CD4-positive, alpha-beta T cell (primary cell): ENCODE measurements at regions of chr19 and their contacts with region 1.

Region 1: DNA sequence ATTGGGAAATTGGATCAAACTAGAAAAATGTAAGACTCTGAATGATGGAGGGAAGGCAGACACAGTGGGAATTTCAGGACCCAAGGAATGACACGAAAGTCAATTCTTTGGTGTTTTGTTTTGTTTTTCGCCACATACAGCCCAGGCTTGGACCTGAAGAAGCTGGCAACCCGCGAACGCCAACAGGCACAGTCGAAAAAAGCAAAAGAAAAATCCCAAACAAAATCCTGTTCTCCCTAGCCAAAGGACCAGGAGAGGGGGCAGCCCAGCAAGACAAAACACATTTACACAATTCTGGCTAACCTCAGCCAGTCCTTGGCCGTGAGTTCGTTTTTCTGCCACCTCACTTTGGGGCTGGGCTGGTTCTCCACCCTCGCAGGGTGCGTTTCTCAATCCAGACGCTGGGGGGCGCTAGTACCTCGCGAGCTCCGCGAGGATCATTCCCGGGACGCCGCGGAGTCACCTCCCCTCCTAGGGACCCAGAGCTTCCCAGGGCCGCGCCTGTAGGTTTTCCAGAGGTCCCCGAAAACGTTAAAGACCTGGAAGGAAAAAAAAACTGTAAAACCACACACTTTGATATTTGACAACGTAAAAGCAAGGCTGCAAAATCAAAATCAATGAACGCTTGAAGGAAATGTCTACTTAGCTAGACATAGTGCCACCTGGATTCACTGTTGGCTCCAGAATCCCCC is 34.9 kb upstream of the TPM4 start:
- DNase-seq: peak; percentile 55 to 84 (median 68)
- ATAC-seq: peak; percentile 79
- H3K4me3 ChIP-seq: peak overlapping the region; percentile 11
- H3K4me3 Mint-ChIP-seq: no peak overlapping the region
- H3K27ac ChIP-seq: no peak overlapping the region
- H3K27ac Mint-ChIP-seq: no peak overlapping the region
- H3K4me1 ChIP-seq: peaks cover 10% of the 10 kb centered on the region
- H3K4me1 Mint-ChIP-seq: peaks cover 5% of the 10 kb centered on the region
- H3K27me3 ChIP-seq: no peaks in the 10 kb centered on the region
- H3K27me3 Mint-ChIP-seq: no peaks in the 10 kb centered on the region
- CTCF ChIP-seq: peak; percentile 98

Region 2: GRCh38 chr19:15629003-15629880 is 412.2 kb before region 1 on chr19:
- CTCF ChIA-PET with region 1: interaction called, 3 read pairs
- POLR2A ChIA-PET with region 1: no interaction called
- intact Hi-C with region 1: loop called in 1 of 2 experiments (anchors 5 kb)
- DNase-seq: peak; percentile 77 to 95 (median 90)
- ATAC-seq: peak; percentile 98
- H3K4me3 ChIP-seq: no peak overlapping the region
- H3K4me3 Mint-ChIP-seq: no peak overlapping the region
- H3K27ac ChIP-seq: no peak overlapping the region
- H3K27ac Mint-ChIP-seq: no peak overlapping the region
- H3K4me1 ChIP-seq: peaks cover 10% of the 10 kb centered on the region
- H3K4me1 Mint-ChIP-seq: no peaks in the 10 kb centered on the region
- H3K27me3 ChIP-seq: peaks cover 0 to 7% of the 10 kb centered on the region in 2 experiments
- H3K27me3 Mint-ChIP-seq: peaks cover 22% of the 10 kb centered on the region
- CTCF ChIP-seq: peak; percentile 93

Region 3: DNA sequence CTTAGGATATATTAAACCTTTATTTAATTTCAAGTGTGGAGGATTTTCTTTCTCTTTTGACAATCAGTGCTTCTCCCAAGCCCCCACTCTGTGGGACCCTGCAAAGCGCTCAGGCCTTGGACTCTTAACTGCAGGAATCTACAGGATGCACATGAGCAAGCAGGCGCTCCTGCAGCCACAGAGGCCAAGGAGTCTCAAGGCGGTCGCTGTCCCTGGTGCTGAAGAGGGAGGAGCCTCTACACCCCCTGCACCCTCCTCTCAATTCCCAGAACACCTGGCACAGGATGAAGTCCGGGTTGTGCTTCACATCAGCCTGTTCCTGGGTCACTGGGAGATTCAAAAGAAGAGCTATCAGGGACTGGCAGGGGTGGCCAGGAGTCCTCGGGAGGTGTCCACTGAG is 79.1 kb before region 1 on chr19:
- CTCF ChIA-PET with region 1: no interaction called
- POLR2A ChIA-PET with region 1: no interaction called
- intact Hi-C with region 1: no loop called
- DNase-seq: no peak
- ATAC-seq: no peak
- H3K4me3 ChIP-seq: no peak overlapping the region
- H3K4me3 Mint-ChIP-seq: no peak overlapping the region
- H3K27ac ChIP-seq: no peak overlapping the region
- H3K27ac Mint-ChIP-seq: no peak overlapping the region
- H3K4me1 ChIP-seq: no peaks in the 10 kb centered on the region
- H3K4me1 Mint-ChIP-seq: no peaks in the 10 kb centered on the region
- H3K27me3 ChIP-seq: peaks cover 16 to 37% of the 10 kb centered on the region in 2 experiments
- H3K27me3 Mint-ChIP-seq: peaks cover 65% of the 10 kb centered on the region
- CTCF ChIP-seq: no peak

Region 4: GRCh38 chr19:16001481-16002312 is 39.7 kb before region 1 on chr19:
- CTCF ChIA-PET with region 1: no interaction called
- POLR2A ChIA-PET with region 1: no interaction called
- intact Hi-C with region 1: no loop called
- DNase-seq: peak in 8 of 14 experiments; percentile 3 to 73 (median 30)
- ATAC-seq: peak; percentile 83
- H3K4me3 ChIP-seq: peak overlapping the region; percentile 54
- H3K4me3 Mint-ChIP-seq: peak overlapping the region; percentile 84
- H3K27ac ChIP-seq: no peak overlapping the region
- H3K27ac Mint-ChIP-seq: peak overlapping the region; percentile 61
- H3K4me1 ChIP-seq: peaks cover 17% of the 10 kb centered on the region
- H3K4me1 Mint-ChIP-seq: peaks cover 27% of the 10 kb centered on the region
- H3K27me3 ChIP-seq: no peaks in the 10 kb centered on the region
- H3K27me3 Mint-ChIP-seq: no peaks in the 10 kb centered on the region
- CTCF ChIP-seq: no peak

Region 5: GRCh38 chr19:16062789-16063188 is 21.3 kb after region 1 on chr19:
- CTCF ChIA-PET with region 1: interaction called, 22 read pairs
- POLR2A ChIA-PET with region 1: no interaction called
- intact Hi-C with region 1: no loop called
- DNase-seq: peak; percentile 58 to 84 (median 66)
- ATAC-seq: peak; percentile 91
- H3K4me3 ChIP-seq: no peak overlapping the region
- H3K4me3 Mint-ChIP-seq: no peak overlapping the region
- H3K27ac ChIP-seq: no peak overlapping the region
- H3K27ac Mint-ChIP-seq: no peak overlapping the region
- H3K4me1 ChIP-seq: peaks cover 24% of the 10 kb centered on the region
- H3K4me1 Mint-ChIP-seq: peaks cover 18% of the 10 kb centered on the region
- H3K27me3 ChIP-seq: no peaks in the 10 kb centered on the region
- H3K27me3 Mint-ChIP-seq: no peaks in the 10 kb centered on the region
- CTCF ChIP-seq: peak; percentile 90

Region 6: GRCh38 chr19:16076154-16076957 is 34.9 kb after region 1 on chr19 and contains the start of gene TPM4:
- CTCF ChIA-PET with region 1: interaction called, 8 read pairs
- POLR2A ChIA-PET with region 1: no interaction called
- intact Hi-C with region 1: loop called in 1 of 2 experiments (anchors 5 kb)
- DNase-seq: peak; percentile 46 to 94 (median 74)
- ATAC-seq: peak; percentile 26
- H3K4me3 ChIP-seq: peak within 1 kb of the TSS; percentile 87
- H3K4me3 Mint-ChIP-seq: peak within 1 kb of the TSS; percentile 85
- H3K27ac ChIP-seq: peak within 1 kb of the TSS; percentile 72 to 83
- H3K27ac Mint-ChIP-seq: peak within 1 kb of the TSS; percentile 94
- H3K4me1 ChIP-seq: peaks cover 83% of the 10 kb centered on the region
- H3K4me1 Mint-ChIP-seq: peaks cover 73% of the 10 kb centered on the region
- H3K27me3 ChIP-seq: no peaks in the 10 kb centered on the region
- H3K27me3 Mint-ChIP-seq: no peaks in the 10 kb centered on the region
- CTCF ChIP-seq: no peak
- total RNA-seq, gene TPM4: 182 to 185 TPM

Region 7: GRCh38 chr19:16088351-16089009 is 47.0 kb after region 1 on chr19:
- CTCF ChIA-PET with region 1: interaction called, 13 read pairs
- POLR2A ChIA-PET with region 1: interaction called, 3 read pairs
- intact Hi-C with region 1: no loop called
- DNase-seq: no peak
- ATAC-seq: no peak
- H3K4me3 ChIP-seq: no peak overlapping the region
- H3K4me3 Mint-ChIP-seq: no peak overlapping the region
- H3K27ac ChIP-seq: no peak overlapping the region
- H3K27ac Mint-ChIP-seq: peak overlapping the region; percentile 64
- H3K4me1 ChIP-seq: peaks cover 45% of the 10 kb centered on the region
- H3K4me1 Mint-ChIP-seq: peaks cover 46% of the 10 kb centered on the region
- H3K27me3 ChIP-seq: no peaks in the 10 kb centered on the region
- H3K27me3 Mint-ChIP-seq: no peaks in the 10 kb centered on the region
- CTCF ChIP-seq: no peak

Region 8: GRCh38 chr19:16143399-16144245 is 102.2 kb after region 1 on chr19 and contains the start of gene HSH2D:
- CTCF ChIA-PET with region 1: interaction called, 11 read pairs
- POLR2A ChIA-PET with region 1: no interaction called
- intact Hi-C with region 1: no loop called
- DNase-seq: peak; percentile 73 to 90 (median 80)
- ATAC-seq: peak; percentile 100
- H3K4me3 ChIP-seq: peak within 1 kb of the TSS; percentile 77
- H3K4me3 Mint-ChIP-seq: peak within 1 kb of the TSS; percentile 97
- H3K27ac ChIP-seq: peak within 1 kb of the TSS; percentile 70 to 74
- H3K27ac Mint-ChIP-seq: peak within 1 kb of the TSS; percentile 96
- H3K4me1 ChIP-seq: peaks cover 60% of the 10 kb centered on the region
- H3K4me1 Mint-ChIP-seq: peaks cover 28% of the 10 kb centered on the region
- H3K27me3 ChIP-seq: no peaks in the 10 kb centered on the region
- H3K27me3 Mint-ChIP-seq: no peaks in the 10 kb centered on the region
- CTCF ChIP-seq: no peak
- total RNA-seq, gene HSH2D: 46.0 to 46.9 TPM

Region 9: DNA sequence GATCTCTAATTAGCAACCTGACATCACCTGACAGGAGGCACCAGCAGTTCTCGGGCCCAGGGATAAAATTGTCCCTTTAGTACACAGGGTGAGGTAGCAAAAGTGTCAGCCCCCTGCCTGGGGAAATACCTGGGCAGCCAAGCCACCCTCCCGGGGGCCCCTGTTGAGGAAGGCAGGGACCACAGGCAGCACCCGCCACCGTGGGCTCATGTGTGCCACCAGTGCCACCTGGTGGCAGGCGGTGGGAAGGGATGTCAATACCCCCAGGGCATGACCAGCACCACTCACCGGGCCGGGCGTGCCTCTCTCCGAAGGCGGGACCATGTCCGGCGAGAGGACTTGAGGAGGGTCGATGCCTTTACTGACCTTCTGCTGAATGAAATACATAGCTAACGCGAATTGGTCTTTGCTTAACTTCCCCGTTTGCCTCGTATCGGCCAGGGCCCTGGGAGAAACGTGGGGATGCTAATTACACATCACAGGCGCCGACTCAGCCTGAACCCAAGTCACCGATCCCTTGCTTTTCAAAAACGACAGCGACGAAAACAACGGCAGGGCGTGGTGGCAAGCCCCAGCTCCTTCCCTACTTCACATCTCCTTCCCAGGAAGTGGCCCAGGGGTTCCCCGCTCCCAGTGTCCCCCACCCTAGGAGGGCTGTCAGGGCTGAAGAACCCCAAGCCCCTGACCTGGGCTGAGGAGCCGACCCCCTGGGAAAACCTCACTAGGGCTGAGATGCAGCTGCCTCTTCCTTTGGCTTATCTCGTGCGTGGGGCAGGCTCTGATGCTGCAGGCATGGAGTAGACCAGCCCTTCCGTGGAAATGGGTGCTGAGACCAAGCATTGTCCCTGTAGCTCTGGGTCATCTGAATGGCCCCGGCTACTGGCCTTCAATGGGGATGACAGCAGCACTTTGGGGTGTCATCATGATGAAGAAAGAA is 376.5 kb after region 1 on chr19:
- CTCF ChIA-PET with region 1: no interaction called
- POLR2A ChIA-PET with region 1: no interaction called
- intact Hi-C with region 1: loop called (anchors 5 kb)
- DNase-seq: peak; percentile 57 to 86 (median 67)
- ATAC-seq: peak; percentile 96
- H3K4me3 ChIP-seq: no peak overlapping the region
- H3K4me3 Mint-ChIP-seq: no peak overlapping the region
- H3K27ac ChIP-seq: no peak overlapping the region
- H3K27ac Mint-ChIP-seq: peak overlapping the region; percentile 33
- H3K4me1 ChIP-seq: peaks cover 10% of the 10 kb centered on the region
- H3K4me1 Mint-ChIP-seq: peaks cover 12% of the 10 kb centered on the region
- H3K27me3 ChIP-seq: no peaks in the 10 kb centered on the region
- H3K27me3 Mint-ChIP-seq: no peaks in the 10 kb centered on the region
- CTCF ChIP-seq: peak; percentile 89